Activated CD4-positive, alpha-beta memory T cell treated with anti-CD3 and anti-CD28 coated beads for 36 hours (primary cell): ENCODE measurements at regions of chr3 and their contacts with region 1.

Region 1: DNA sequence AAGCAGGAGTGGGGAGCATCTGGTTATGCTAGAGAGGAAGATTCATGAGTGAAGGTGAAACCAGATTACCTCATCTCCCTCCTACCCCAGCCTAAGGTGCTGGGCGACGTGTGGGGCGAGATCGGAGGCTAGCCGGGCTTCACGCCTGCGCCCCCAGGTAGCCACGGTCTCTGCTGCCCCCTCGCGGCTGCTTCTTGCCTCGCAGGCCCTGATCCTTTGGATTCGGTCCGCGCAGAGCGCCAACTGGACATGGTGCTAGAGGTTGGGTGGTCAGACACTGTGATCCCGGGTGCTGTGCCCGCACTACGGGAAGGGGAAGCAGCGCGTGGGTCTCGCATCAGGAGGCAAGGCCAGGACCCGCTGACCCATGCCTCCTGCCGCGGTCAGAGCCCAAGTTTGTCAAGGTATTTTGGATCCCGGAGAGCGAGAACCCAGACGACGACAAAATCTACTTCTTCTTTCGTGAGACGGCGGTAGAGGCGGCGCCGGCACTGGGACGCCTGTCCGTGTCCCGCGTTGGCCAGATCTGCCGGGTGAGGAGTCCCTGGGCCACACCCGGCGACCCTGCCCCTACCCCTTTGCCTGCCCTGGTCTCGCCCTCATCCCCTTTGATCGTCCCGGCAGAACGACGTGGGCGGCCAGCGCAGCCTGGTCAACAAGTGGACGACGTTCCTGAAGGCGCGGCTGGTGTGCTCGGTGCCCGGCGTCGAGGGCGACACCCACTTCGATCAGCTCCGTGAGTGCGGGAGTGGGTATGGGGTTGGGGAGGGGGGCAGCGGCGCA is 4.2 kb downstream of the SEMA3B start:
- DNase-seq: peak; percentile 94
- H3K4me3 Mint-ChIP-seq: peak overlapping the region; percentile 38
- H3K27ac Mint-ChIP-seq: no peak overlapping the region
- H3K4me1 Mint-ChIP-seq: peaks cover 32% of the 10 kb centered on the region
- H3K27me3 Mint-ChIP-seq: peaks cover 27% of the 10 kb centered on the region

Region 2: DNA sequence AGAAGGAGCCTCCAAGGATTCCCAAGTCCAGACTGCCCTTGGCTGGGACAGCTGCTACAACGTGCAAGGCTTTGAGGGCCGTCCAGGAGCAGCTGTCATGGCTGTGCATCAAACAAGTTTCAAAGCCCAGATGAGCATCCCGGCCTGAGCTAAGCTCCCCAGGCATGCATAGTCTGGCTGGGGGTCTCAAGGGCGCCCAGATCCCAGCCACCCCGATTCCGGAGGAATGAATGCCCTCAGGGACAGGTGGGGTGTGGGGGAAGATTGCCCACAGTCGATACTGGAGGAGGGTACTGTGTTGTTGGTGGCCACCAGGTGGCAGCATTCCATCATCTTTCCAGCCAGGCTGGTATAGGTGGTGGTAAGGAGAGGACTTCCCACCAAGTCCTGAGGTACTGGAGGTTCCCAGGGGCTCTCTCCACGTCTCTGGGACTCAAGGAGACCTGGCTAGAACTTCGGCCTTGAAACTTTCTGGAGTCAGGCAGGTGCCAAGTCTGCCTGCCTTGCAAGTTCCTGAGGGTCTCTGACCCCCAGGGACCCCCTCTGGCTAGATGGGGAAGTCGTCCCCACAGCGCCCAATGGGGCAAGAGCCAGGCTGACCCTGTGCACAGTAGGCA is 151.6 kb before region 1 on chr3:
- CTCF ChIA-PET with region 1: interaction called, 3 read pairs
- POLR2A ChIA-PET with region 1: no interaction called
- intact Hi-C with region 1: loop called (anchors 5 kb)
- DNase-seq: peak; percentile 80
- H3K4me3 Mint-ChIP-seq: no peak overlapping the region
- H3K27ac Mint-ChIP-seq: no peak overlapping the region
- H3K4me1 Mint-ChIP-seq: no peaks in the 10 kb centered on the region
- H3K27me3 Mint-ChIP-seq: no peaks in the 10 kb centered on the region

Region 3: DNA sequence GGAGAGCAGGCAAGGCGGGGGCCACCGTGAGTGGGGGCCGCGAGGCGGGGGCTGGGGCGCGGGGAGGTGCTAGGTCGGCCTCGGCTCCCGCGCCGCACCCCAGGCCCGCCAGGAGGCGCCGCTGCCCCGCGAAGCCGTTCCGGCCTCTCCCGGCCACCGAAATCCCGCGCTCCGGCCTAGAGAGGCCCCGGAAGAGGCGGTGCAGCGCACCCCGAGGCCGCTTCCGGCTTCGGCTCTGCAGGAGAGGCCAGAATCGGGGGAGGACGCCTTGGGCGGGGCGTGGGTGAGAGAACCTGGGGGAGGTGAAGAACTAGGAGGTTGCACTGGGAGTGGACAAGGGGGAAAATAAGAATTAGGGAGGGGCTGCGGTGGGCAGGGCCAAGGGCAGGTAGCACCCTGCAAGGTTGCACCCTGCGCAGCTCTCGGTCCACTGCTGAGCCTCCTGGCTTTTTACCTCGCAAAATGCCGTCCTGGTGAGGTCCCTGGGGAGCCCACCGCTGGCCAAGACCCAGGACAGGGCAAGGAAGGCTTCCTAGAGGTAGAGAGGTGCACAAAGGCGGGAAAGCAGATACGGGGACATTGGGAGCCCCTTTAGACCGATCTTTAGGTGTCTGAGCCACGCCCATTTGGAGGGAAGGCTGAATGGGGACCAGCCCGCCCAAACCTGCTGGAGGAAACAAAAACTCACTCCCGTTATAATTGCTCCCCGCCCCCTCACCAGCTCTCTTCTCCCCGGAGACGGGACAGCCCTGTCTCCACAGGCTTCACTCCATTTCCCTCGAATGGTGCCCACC is 45.5 kb before region 1 on chr3:
- CTCF ChIA-PET with region 1: interaction called, 45 read pairs
- POLR2A ChIA-PET with region 1: no interaction called
- intact Hi-C with region 1: loop called (anchors 1 kb)
- DNase-seq: peak; percentile 94
- H3K4me3 Mint-ChIP-seq: peak overlapping the region; percentile 94
- H3K27ac Mint-ChIP-seq: peak overlapping the region; percentile 90
- H3K4me1 Mint-ChIP-seq: peaks cover 17% of the 10 kb centered on the region
- H3K27me3 Mint-ChIP-seq: no peaks in the 10 kb centered on the region

Region 4: GRCh38 chr3:50292159-50293078 is 19.3 kb after region 1 on chr3 and contains the start of gene IFRD2:
- CTCF ChIA-PET with region 1: interaction called, 5 read pairs
- POLR2A ChIA-PET with region 1: interaction called, 16 read pairs
- intact Hi-C with region 1: loop called (anchors 1 kb)
- DNase-seq: peak; percentile 98
- H3K4me3 Mint-ChIP-seq: peak within 1 kb of the TSS; percentile 92
- H3K27ac Mint-ChIP-seq: peak within 1 kb of the TSS; percentile 90
- H3K4me1 Mint-ChIP-seq: peaks cover 20% of the 10 kb centered on the region
- H3K27me3 Mint-ChIP-seq: no peaks in the 10 kb centered on the region
- total RNA-seq, gene IFRD2: 111 to 112 TPM

Region 5: GRCh38 chr3:50321336-50322114 is 48.4 kb after region 1 on chr3:
- CTCF ChIA-PET with region 1: interaction called, 6 read pairs
- POLR2A ChIA-PET with region 1: no interaction called
- intact Hi-C with region 1: loop called (anchors 1 kb)
- DNase-seq: peak; percentile 88
- H3K4me3 Mint-ChIP-seq: peak overlapping the region; percentile 77
- H3K27ac Mint-ChIP-seq: peak overlapping the region; percentile 86
- H3K4me1 Mint-ChIP-seq: peaks cover 30% of the 10 kb centered on the region
- H3K27me3 Mint-ChIP-seq: no peaks in the 10 kb centered on the region

Region 6: GRCh38 chr3:50466177-50466576 is 193.1 kb after region 1 on chr3:
- CTCF ChIA-PET with region 1: no interaction called
- POLR2A ChIA-PET with region 1: no interaction called
- intact Hi-C with region 1: no loop called
- DNase-seq: no peak
- H3K4me3 Mint-ChIP-seq: no peak overlapping the region
- H3K27ac Mint-ChIP-seq: no peak overlapping the region
- H3K4me1 Mint-ChIP-seq: no peaks in the 10 kb centered on the region
- H3K27me3 Mint-ChIP-seq: no peaks in the 10 kb centered on the region